T-cell (primary cell): ENCODE measurements at regions of chr11 and their contacts with region 1.

Region 1: DNA sequence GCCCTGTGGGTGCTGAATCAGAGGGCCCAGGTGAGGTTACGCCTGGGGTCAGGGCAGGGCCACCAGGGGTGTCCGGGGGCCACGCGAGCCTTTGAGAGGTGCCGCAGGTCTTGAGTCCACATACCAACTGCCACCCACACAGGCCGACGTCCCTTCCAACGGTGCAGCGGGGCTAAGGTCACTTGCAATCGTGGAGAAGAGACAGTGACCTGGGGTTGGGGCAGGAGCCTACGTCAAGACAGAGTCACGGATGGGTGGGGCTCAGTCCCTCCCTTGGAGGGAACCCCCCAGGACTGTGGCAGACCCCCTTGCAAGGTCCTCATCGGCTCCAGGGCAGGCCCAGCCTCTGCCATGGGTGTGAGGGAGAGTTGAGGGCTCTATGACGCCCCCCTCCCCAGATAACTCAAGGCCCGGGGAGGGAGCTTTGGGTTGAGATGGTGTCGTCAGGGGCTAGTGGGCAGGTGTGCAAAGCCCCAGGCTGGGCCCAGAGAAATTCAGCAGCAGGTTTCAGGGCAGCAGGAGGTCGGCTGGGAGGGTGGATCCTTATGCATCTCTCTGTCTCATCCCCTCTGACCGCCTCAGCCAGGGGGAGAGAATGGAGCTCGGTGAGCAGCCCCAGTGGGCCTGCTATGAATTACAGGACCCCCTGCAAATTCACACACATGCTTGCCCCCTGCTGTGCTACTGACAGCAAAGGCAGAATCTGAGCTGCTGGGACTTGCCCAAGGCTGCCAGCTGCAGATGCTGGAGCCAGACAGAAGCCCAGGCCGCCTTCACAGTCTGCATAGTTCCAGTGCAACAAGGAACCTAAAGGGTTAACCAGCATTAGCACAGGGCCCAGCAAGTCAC is 60.0 kb downstream of the MYEOV start:
- DNase-seq: peak in 1 of 35 experiments; percentile 2
- ATAC-seq: no peak
- H3K4me3 ChIP-seq: no peak overlapping the region
- H3K4me3 Mint-ChIP-seq: no peak overlapping the region
- H3K27ac ChIP-seq: no peak overlapping the region
- H3K27ac Mint-ChIP-seq: no peak overlapping the region
- H3K4me1 ChIP-seq: no peaks in the 10 kb centered on the region
- H3K4me1 Mint-ChIP-seq: no peaks in the 10 kb centered on the region
- H3K27me3 ChIP-seq: peaks cover 0 to 29% of the 10 kb centered on the region in 2 experiments
- H3K27me3 Mint-ChIP-seq: peaks cover 12 to 17% of the 10 kb centered on the region in 2 donors

Region 2: DNA sequence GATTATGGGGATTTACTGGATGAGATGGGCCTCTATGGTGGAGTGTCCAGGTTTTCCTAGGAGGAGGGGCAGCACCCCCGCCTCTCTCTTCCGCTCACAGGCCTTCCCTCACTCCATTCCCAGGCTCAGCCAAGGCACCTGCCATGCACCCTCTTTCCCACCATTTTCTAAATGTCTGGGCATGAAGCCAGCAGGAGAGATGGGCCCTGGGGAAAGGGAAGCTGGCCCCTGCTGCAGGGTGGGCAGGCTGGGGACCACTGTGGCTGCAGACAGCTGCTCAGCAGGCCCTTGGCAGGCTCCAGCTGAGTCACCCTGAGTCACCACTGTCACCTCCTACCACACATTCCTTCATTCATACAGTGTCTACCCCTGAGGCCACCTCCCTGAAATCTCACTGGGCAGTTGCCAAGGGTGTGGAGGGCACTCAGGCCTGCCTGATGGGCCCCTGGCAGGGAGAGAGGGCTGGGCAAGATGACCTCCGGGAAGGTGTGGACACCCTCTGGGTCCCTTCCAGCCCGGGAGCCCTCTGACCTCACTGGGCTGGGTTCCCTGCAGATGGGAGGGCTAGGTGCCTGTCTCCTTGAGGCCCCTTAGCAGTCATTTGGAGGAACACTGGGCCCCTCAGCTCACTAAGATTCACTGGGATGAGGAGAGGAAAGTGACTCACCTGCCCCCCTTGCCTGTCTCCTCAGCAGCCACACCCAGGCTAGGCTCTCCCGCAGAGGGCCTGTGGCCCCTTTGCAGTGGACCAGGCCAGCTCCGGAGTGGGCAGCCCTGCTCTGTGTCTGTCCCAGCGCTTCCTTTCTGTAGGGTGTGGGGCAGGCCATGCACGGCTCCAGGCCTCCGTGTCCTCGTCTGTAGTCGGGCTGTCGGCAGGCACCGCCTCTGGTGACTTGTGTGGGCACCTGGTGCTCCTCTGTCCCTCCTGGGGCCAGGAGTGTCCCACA is 52.2 kb before region 1 on chr11:
- CTCF ChIA-PET with region 1: no interaction called
- POLR2A ChIA-PET with region 1: interaction called in 1 of 2 experiments, 13 read pairs
- DNase-seq: no peak
- ATAC-seq: no peak
- H3K4me3 ChIP-seq: no peak overlapping the region
- H3K4me3 Mint-ChIP-seq: no peak overlapping the region
- H3K27ac ChIP-seq: no peak overlapping the region
- H3K27ac Mint-ChIP-seq: no peak overlapping the region
- H3K4me1 ChIP-seq: peaks cover 18 to 31% of the 10 kb centered on the region in 2 experiments
- H3K4me1 Mint-ChIP-seq: peaks cover 28 to 48% (median 43%) of the 10 kb centered on the region in 3 donors
- H3K27me3 ChIP-seq: no peaks in the 10 kb centered on the region
- H3K27me3 Mint-ChIP-seq: no peaks in the 10 kb centered on the region

Region 3: DNA sequence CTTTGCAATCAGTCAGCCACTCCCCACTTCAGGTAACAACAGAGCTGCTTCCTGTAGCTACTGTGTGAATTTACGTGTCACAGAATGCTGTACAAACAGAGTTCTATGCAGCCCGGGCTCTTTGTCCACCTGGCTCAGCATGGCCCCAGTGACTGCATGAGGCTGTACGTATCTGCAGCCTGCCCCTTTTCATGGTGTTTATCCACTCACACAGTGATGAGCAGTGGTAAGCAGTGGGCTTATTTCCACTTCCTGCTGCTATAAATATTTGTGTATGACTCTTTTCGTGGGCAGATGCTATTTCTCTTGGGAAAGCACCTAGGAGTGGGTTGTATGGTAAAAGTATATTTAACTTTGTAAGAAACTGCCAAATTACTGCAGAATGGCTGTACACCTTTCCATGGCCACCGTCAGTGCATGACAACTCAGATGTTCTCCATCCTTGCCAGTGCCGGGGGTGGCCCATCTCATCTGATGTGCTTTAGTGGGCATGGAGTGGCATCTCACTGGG is 16.7 kb before region 1 on chr11:
- CTCF ChIA-PET with region 1: no interaction called
- POLR2A ChIA-PET with region 1: no interaction called
- DNase-seq: peak in 24 of 35 experiments; percentile 6 to 63 (median 26)
- ATAC-seq: peak; percentile 63 to 83 (median 75)
- H3K4me3 ChIP-seq: peak overlapping the region in 1 of 2 donors; percentile 30
- H3K4me3 Mint-ChIP-seq: peak overlapping the region; percentile 19 to 70 (median 31)
- H3K27ac ChIP-seq: peak overlapping the region; percentile 61
- H3K27ac Mint-ChIP-seq: peak overlapping the region; percentile 84
- H3K4me1 ChIP-seq: peaks cover 11 to 31% of the 10 kb centered on the region in 2 experiments
- H3K4me1 Mint-ChIP-seq: peaks cover 26 to 38% (median 31%) of the 10 kb centered on the region in 3 donors
- H3K27me3 ChIP-seq: peaks cover 0 to 2% of the 10 kb centered on the region in 2 experiments
- H3K27me3 Mint-ChIP-seq: no peaks in the 10 kb centered on the region